WTC11 (cell line): ENCODE measurements at regions of chr3 and their contacts with region 1.

Region 1: GRCh38 chr3:44409640-44410410 is 67.6 kb downstream of the ZNF445 start:
- DNase-seq: no peak
- ATAC-seq: no peak
- H3K4me3 Mint-ChIP-seq: no peak overlapping the region
- H3K27ac Mint-ChIP-seq: no peak overlapping the region
- H3K4me1 Mint-ChIP-seq: peaks cover 6% of the 10 kb centered on the region
- H3K27me3 Mint-ChIP-seq: no peaks in the 10 kb centered on the region
- CTCF ChIP-seq: no peak

Region 2: DNA sequence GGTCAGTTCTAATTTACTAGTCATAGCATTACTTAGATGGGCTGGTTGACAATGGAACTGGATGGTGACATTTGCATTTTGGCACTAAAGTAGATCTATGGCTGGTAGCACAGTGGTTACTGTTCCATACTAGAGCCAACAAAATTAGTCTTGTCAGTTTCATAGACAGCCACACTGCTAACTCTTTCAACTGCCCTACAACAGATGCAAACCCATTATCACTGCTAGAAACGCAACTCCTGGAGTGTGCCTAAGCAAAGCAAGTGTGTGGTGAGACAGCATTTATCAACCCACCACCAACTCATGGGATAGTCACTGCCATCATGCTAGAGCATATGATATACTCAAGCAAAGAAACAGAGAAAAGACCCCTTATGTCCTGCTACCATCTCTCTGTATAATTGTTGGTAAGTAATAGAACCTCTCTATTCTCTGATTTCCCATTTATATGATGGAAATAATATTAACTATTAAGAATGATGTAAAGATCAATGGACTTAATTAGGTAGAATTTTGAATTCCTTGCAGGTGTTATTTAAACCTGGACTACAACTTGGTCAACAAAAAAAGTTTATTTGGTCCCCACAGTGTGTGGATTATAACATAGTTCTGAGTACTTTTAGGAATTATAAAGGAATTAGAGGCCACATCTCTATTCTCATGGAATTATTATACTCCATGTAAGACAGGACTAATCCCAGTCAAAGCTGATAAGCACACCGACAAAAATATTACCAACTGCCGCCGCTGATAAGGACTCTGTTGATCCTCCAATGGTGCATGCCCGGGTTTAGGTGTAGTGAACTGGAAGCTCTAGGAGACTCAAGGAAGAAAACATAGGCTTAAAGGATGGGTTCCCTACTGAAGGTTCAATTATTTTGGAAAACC is 738.9 kb before region 1 on chr3:
- CTCF ChIA-PET with region 1: no interaction called
- POLR2A ChIA-PET with region 1: interaction called, 10 read pairs
- DNase-seq: no peak
- ATAC-seq: no peak
- H3K4me3 Mint-ChIP-seq: no peak overlapping the region
- H3K27ac Mint-ChIP-seq: no peak overlapping the region
- H3K4me1 Mint-ChIP-seq: peaks cover 12% of the 10 kb centered on the region
- H3K27me3 Mint-ChIP-seq: no peaks in the 10 kb centered on the region
- CTCF ChIP-seq: no peak

Region 3: DNA sequence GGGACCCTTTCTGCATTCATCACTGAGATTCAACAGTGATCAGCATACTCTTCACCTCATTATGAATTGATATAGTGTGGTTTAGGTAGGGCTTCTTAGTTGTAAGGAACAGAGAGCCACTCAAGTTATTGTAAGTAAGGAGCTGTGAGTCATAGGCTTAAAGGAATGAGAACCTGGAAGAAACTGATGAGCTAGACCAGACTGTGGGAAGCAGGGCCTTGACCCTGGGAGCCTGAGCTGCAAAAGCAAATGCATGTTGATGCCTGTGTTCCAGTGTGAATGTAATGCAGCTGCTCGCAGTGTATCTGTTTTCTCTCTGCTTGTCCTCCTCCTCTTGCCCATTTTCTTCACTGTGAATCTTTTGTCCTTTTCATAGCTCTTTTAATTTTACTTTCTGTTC is 158.7 kb after region 1 on chr3:
- CTCF ChIA-PET with region 1: no interaction called
- POLR2A ChIA-PET with region 1: no interaction called
- DNase-seq: no peak
- ATAC-seq: no peak
- H3K4me3 Mint-ChIP-seq: no peak overlapping the region
- H3K27ac Mint-ChIP-seq: no peak overlapping the region
- H3K4me1 Mint-ChIP-seq: no peaks in the 10 kb centered on the region; the same call in 1 of the 2 replicates
- H3K27me3 Mint-ChIP-seq: no peaks in the 10 kb centered on the region
- CTCF ChIP-seq: no peak